ENCODE measurements at regions of chr11 and their contacts with region 1.

Region 1: DNA sequence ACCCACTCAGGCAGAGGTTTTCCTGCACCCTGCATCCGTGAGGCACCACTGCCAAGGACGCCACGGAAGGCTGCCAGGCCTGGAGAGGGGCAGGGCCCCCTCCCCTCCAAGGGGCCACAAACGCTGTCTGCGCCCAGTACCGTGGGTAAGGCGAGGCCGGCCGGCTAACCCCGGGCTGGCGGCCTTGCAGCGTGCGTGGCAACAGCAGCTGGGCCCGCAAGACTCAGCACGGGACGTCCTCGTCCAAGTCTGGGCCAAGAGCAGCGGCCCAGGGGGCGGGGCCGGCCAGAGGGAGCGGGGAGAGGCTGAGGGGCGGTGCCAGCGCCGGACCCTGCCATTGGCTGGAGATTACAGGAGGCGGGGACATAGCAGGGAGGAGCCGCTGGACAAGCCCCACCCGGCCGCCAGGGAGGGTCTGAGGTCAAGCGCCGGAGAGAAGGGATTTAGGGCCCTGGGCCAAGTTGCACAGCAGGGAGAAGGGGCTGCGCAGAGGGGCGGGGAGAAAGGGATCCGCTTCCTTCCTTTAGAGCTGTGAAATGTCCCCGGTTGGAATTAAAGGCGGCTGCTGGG is 16.0 kb downstream of the SLC43A1 start:
- DNase-seq: peak; percentile 26
- H3K4me3 Mint-ChIP-seq: no peak overlapping the region
- H3K27ac Mint-ChIP-seq: no peak overlapping the region
- H3K4me1 Mint-ChIP-seq: no peaks in the 10 kb centered on the region
- H3K27me3 Mint-ChIP-seq: no peaks in the 10 kb centered on the region

Region 2: GRCh38 chr11:57460022-57460757 is 39.3 kb before region 1 on chr11 and contains the start of gene RTN4RL2:
- intact Hi-C with region 1: no loop called
- DNase-seq: peak; percentile 35
- H3K4me3 Mint-ChIP-seq: peak within 1 kb of the TSS; percentile 82
- H3K27ac Mint-ChIP-seq: no peak within 1 kb of the TSS
- H3K4me1 Mint-ChIP-seq: peaks cover 22% of the 10 kb centered on the region
- H3K27me3 Mint-ChIP-seq: peaks cover 48% of the 10 kb centered on the region
- total RNA-seq, gene RTN4RL2: 0.18 TPM in 1 of 2 replicates, not detected in the other

Region 3: GRCh38 chr11:57515332-57516060 is 16.0 kb after region 1 on chr11 and contains the start of gene SLC43A1:
- intact Hi-C with region 1: loop called (anchors 1 kb)
- DNase-seq: peak; percentile 35
- H3K4me3 Mint-ChIP-seq: peak within 1 kb of the TSS; percentile 99
- H3K27ac Mint-ChIP-seq: peak within 1 kb of the TSS; percentile 83
- H3K4me1 Mint-ChIP-seq: peaks cover 26% of the 10 kb centered on the region
- H3K27me3 Mint-ChIP-seq: no peaks in the 10 kb centered on the region
- total RNA-seq, gene SLC43A1: 27.6 and 30.9 TPM in 2 replicates

Region 4: GRCh38 chr11:57667736-57668435 is 168.4 kb after region 1 on chr11 and contains the start of gene ZDHHC5:
- intact Hi-C with region 1: no loop called
- DNase-seq: peak; percentile 100
- H3K4me3 Mint-ChIP-seq: peak within 1 kb of the TSS; percentile 99
- H3K27ac Mint-ChIP-seq: peak within 1 kb of the TSS; percentile 99
- H3K4me1 Mint-ChIP-seq: peaks cover 29% of the 10 kb centered on the region
- H3K27me3 Mint-ChIP-seq: no peaks in the 10 kb centered on the region
- total RNA-seq, gene ZDHHC5: 64.7 and 69.9 TPM in 2 replicates

Measured in activated T-helper 2 cell treated with anti-CD3 and anti-CD28 coated beads, Interferon-gamma antibody, Interleukin-2, Interleukin-4, amounts not matched to agents 10 μg/mL and 5 μg/mL and 100 μg/mL, durations not matched to agents 14 hours and 24 hours and 36 hours (primary cell).